GM10248 (cell line): ENCODE measurements at regions of chr6 and their contacts with region 1.

Region 1: DNA sequence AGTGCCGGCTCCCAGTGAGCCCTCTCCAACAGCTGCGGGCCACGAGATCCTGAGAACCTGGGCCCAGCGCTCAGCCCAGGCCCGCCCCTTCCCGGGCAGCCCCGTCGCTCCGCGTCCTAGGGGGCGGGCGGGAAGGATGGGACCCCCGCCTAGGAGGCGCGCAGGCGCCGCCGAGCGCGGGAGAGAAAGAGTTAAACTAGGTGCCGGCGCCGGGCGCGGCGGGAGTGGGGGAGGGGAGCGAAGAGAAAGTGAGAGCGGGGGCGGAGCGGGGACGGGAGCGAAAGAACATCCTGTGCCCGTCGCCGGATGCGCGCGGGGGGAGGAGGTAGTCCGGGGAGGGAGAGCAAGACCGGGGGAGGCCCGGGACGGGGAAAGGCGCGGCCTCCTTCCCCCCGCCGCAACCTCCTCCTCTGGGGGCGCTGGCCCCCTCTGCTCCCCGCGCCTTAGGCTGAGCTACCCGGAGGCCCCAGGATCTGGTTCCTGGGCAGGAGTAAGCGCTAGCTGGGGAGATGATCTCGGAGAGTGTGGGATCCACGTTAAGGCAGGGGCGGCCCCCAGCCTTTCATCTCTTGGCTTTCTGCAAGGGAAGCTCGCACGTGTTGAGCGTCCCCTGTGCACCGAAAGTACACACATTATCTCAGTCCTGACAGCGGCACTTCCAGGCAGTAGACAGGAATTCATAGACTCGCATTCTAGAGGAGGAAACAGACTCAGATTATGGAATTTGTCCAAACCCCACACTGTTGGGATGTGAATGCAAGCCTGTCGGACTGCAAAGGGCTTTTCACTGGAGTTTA is 4.9 kb upstream of the ARMC12 start:
- DNase-seq: peak; percentile 91
- CTCF ChIP-seq: no peak

Region 2: GRCh38 chr6:35569011-35569461 is 162.9 kb before region 1 on chr6:
- CTCF ChIA-PET with region 1: interaction called, 11 read pairs
- POLR2A ChIA-PET with region 1: no interaction called
- DNase-seq: peak; percentile 34
- CTCF ChIP-seq: peak; percentile 33

Region 3: DNA sequence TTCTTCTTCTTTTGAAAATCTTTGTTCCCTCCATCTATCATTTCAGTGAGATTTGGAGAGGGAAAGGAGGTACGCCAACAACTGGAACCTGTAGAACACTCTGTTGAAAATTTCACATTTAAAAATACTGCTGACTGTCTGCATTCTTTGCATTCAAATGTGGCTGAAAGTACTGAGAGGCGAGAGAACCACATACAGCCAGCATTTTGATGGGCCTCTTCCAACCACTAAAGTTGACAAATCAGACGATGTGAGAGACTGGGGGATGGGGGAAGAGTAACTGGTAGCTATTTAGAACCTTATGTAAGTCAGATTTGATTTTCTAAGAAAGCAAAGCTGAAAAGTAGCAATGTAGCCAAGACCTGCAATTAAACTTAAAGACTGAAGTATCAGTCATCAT is 120.7 kb before region 1 on chr6:
- CTCF ChIA-PET with region 1: interaction called, 24 read pairs
- POLR2A ChIA-PET with region 1: no interaction called
- DNase-seq: no peak
- CTCF ChIP-seq: no peak

Region 4: DNA sequence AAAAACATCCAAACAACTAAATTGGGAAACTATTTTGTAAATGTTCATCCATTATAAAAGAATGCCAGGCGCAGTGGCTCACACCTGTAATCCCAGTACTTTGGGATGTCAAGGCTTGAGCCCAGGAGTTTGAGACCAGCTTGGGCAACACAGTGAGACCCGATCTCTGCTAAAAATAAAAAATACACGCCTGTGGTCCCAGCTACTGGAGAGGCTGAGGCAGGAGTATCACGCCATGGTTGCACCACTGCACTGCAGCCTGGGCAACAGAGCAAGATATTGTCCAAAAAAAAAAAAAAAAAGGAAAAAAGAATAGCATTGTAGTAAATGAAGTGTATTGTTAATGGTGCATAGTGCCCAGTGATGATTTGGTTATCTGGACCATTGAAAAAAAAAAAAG is 81.9 kb before region 1 on chr6:
- CTCF ChIA-PET with region 1: interaction called, 11 read pairs
- POLR2A ChIA-PET with region 1: no interaction called
- DNase-seq: no peak
- CTCF ChIP-seq: no peak

Region 5: GRCh38 chr6:35710241-35710847 is 21.6 kb before region 1 on chr6:
- CTCF ChIA-PET with region 1: interaction called, 30 read pairs
- POLR2A ChIA-PET with region 1: no interaction called
- DNase-seq: no peak
- CTCF ChIP-seq: no peak

Region 6: DNA sequence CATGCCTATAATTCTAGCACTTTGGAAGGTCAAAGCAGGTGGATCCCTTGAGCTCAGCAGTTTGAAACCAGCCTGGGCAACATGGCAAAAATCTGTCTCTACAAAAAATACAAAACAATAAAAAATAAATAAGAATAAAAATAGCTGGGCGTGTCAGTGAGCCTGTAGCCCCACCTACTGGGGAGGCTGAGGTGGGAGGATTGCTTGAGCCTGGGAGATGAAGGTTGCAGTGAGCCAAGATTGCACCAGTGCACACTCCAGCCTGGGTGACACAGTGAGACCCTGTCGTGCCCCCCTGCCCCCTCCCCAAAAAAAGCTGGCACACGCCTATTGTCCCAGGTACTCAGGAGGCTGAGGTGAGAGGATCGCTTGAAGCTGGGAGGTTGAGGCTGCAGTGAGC is 224.0 kb after region 1 on chr6:
- CTCF ChIA-PET with region 1: interaction called, 13 read pairs
- POLR2A ChIA-PET with region 1: no interaction called
- DNase-seq: no peak
- CTCF ChIP-seq: peak; percentile 42

Region 7: DNA sequence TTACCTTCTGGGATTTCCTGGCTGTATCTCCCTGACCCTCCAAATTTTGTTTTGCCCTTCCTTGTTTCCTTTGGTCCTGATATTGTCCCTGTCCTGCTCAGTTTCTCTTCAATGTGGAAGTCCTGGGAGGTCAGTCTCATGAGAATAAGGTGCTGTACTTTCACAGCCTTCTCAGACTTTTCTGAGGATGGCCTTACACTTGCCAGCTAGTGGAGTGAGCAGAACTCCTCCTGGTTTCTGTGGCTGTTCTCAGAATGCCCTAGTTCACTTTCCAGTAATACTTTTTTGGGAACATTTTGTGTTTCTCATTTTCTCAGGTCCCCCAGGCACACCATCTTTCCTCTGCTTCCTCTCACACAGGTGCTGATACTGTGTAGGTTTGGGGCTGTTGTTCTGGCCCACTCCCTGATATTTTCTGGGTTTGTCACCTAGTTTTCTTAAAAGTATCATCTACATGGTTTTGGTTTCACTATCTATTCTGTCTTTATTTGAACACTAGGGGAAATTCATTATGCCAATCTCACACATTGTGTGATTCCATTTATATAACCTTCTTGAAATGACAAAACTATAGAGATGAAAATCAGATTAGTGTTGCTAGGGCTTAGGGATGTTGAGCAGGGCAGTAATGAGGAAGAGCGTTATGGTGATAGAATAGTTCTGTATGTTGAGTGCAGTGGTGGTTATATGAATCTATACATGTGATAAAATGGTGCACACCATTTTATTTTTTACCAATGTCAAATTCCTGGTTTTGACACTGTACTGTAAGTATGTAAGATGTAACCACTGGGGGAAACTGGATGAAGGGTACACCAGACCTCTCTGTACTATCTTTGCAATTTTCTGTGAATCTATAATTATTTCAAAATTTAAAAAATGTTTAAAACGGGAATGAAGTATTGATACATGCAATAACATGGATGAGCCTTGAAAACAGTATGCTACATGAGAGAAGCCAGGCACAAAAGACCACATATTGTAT is 437.4 kb after region 1 on chr6:
- CTCF ChIA-PET with region 1: no interaction called
- POLR2A ChIA-PET with region 1: no interaction called
- DNase-seq: peak; percentile 23
- CTCF ChIP-seq: no peak

Region 8: DNA sequence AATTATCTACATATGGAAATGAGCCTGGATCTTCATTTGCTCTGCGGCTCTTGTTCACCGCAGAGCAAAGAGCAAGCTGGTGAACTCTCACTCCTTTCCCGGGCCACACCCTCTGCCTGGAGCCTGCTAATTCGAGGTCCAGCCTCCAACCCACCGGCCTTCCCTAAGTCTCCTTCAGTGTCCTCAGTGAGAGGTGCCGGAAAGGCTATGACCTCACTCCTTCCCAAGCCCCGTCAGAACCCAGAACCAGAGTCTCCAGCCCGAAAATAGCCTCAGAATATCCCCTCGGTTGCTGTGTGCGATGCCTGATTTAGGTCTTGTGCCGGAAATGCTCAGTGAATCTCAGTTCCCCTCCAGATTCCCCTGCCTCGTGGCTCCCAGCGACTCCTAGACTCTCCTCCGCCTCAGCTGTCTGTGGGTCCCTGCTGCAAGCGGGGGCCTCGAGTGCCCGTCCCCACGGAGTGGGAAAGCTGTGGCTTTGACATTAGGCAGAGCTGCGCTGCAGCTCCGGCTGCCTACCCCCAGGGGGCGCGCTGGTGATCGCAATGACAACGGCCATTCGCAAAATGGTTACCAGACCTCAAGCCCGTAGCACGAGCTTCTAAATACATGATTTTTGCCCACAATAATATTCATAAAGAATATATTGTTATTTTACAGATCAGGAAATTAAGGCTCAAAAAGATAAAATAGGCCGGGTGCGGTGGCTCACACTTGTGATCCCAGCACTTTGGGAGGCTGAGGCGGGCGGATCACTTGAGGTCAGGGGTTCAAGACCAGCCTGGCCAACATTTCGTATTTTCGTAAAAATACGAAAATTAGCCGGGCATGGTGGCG is 608.9 kb after region 1 on chr6:
- CTCF ChIA-PET with region 1: no interaction called
- POLR2A ChIA-PET with region 1: no interaction called
- DNase-seq: peak; percentile 83
- CTCF ChIP-seq: peak; percentile 96